HEK293 (cell line): ENCODE measurements at regions of chr19 and their contacts with region 1.

Region 1: DNA sequence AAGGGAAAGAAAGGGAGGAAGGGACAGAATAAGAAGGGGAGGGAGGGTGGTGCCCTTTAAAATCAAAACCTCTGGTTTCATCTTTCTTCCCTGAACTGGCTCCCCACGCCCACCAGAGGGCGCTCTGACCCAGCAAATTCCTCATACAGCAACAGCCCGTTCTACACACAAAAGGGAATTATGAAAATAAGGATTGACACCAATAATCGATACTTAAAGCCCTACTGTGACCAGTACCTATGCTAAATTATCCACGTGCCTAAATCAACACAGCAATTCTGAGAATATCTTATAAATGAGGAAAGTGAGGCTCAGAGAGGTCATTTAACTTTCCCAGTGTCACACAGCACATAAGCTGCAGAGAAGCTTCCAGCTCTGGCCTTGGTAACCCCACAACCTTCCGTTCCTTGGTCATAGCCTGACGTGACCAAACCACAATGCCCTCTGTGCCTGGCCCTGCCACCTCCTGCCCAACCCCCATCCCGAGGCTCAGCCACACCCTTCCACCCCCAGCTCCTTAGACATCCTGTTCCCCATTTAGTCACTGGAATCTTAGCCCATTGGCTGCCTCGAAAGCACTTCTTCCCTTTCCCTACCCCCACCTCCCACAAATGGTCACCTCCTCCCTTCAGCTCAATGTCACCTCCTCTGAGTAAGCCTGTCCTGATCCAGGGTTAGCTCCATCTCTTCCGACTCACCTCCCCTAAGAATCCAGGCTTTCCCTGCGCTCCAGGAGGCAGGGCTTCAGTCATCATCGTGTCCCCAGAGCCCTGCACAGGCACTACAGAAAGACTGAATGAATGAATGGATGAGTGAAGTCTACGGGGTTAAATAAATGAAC is 34.2 kb upstream of the PNMA8B start:
- H3K4me3 ChIP-seq: no peak overlapping the region
- H3K27ac ChIP-seq: no peak overlapping the region
- H3K4me1 ChIP-seq: no peaks in the 10 kb centered on the region
- CTCF ChIP-seq: peak; percentile 89

Region 2: DNA sequence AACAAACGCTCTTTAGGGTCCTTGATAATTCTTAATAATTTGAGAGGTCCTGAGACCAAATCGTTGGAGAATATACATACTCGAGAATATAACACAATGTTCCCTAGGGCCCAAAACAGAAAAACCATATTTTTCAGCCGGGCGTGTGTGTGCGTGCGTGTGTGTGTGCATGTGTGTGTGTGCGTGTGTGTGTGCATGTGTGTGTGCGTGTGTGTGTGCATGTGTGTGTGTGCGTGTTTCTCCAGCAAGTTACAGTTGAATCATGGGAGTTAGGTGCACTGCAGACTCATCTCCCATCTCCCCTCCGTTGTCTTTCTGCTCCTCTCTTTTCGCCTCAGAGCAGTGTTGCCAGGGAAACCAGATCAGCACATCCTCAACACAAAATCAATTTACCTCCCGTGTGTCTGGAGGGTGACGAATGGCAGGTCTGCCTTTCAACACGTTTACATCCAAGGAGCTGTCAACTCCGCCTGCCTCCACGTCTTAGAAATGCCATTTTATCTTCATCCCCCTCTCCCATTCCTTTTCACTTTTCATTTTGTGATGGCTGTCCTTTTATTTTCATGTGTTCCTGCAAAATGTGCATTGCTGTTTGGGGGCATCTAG is 25.9 kb before region 1 on chr19:
- CTCF ChIA-PET with region 1: interaction called, 10 read pairs
- POLR2A ChIA-PET with region 1: no interaction called
- H3K4me3 ChIP-seq: no peak overlapping the region
- H3K27ac ChIP-seq: no peak overlapping the region
- H3K4me1 ChIP-seq: no peaks in the 10 kb centered on the region
- CTCF ChIP-seq: no peak

Region 3: DNA sequence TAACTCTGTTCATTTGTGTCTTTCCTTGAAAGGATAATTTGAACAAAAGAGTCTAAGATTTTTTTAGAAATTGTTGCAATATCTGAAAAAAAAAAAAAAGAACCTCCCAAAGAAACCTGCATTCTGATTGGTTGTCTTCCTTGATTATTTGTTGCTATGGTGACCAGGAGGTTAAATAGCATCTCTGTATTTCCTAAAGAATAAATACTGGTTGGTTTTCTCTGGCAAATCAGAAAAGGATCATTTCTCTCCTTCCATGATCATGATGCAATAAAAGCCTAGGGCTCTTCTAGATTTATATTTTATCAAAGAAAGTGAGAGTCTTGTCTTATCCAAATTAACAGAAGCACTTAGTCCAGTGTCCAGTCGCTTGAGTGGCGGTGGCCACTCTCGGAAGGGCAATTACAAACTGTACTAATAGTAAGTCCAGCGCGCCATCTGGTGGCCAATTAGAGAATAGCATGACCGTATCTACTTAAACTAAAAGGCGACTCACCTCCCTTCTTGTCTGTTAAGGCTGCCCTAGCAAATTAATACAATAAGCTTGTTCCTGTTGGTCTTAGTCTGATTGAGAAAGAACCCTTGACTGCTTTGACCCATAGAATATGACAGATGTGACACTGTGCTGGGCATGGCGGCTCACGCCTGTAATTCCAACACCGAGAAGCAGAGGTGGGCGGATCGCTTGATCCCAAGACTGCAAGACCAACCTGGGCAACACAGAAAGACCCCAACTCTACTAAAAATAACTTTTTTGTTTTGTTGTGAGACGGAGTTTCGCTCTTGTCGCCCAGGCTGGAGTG is 12.8 kb after region 1 on chr19:
- CTCF ChIA-PET with region 1: interaction called, 166 read pairs
- POLR2A ChIA-PET with region 1: no interaction called
- H3K4me3 ChIP-seq: no peak overlapping the region
- H3K27ac ChIP-seq: no peak overlapping the region
- H3K4me1 ChIP-seq: no peaks in the 10 kb centered on the region; the same call in 1 of the 2 replicates
- CTCF ChIP-seq: peak; percentile 75

Region 4: DNA sequence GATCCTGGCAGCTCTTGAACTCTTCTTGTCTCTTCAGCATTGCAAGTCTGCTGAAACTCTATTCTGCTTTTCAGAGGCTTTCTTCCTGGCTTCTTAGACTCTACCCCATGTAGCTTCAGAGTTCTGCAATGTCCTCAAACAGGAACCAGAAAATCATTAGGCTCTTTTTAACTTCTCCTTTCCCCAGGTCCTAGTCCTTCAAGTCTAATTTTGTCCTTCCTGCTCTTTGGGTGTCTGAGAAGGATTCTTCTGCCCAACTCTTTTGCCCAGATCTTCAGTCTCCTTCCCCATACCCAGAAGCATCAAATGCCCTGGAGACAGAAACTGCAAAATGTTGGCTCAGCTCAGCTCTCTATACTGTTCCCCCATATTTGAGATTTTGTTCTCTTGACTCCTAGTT is 21.3 kb after region 1 on chr19:
- CTCF ChIA-PET with region 1: interaction called, 11 read pairs
- POLR2A ChIA-PET with region 1: no interaction called
- H3K4me3 ChIP-seq: no peak overlapping the region
- H3K27ac ChIP-seq: no peak overlapping the region
- H3K4me1 ChIP-seq: no peaks in the 10 kb centered on the region; the same call in 1 of the 2 replicates
- CTCF ChIP-seq: no peak

Region 5: DNA sequence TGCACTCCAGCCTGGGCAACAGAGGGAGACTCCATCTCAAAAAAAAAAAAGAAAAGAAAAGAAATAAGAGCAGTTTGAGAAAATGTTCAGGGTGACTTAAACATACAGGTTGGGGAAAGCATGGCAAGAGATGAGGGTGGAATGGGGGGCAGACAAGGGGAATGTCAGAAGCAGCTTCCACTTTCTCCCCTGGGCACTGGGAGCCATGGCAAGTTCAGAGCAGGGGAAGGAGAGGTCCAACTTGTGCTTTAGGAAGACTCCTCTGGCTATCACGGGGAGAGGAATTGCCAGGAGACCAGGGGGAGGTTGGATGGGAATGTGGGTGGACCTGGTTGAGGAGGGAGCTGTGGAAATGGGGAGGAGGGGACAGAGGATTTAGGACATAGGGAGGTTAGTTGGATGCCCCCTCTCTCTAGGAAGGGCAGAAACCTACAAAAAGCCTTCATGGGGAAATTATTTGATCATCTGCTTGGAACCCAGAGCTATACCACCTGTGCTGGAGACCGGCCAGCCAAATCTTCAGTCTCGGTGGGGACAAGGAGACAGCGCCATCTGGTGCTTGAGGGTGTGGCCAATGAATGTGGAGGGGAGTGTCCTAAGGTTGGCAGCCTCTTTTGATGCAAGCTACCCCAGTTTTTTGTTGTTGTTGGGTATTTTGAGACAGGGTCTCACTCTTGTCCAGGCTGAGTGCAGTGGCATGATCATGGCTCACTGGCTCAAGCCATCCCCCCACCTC is 223.7 kb after region 1 on chr19:
- CTCF ChIA-PET with region 1: interaction called, 10 read pairs
- POLR2A ChIA-PET with region 1: no interaction called
- H3K4me3 ChIP-seq: no peak overlapping the region
- H3K27ac ChIP-seq: no peak overlapping the region
- H3K4me1 ChIP-seq: no peaks in the 10 kb centered on the region
- CTCF ChIP-seq: peak; percentile 57